Naive thymus-derived CD4-positive, alpha-beta T cell (primary cell): ENCODE measurements at regions of chr12 and their contacts with region 1.

Region 1: DNA sequence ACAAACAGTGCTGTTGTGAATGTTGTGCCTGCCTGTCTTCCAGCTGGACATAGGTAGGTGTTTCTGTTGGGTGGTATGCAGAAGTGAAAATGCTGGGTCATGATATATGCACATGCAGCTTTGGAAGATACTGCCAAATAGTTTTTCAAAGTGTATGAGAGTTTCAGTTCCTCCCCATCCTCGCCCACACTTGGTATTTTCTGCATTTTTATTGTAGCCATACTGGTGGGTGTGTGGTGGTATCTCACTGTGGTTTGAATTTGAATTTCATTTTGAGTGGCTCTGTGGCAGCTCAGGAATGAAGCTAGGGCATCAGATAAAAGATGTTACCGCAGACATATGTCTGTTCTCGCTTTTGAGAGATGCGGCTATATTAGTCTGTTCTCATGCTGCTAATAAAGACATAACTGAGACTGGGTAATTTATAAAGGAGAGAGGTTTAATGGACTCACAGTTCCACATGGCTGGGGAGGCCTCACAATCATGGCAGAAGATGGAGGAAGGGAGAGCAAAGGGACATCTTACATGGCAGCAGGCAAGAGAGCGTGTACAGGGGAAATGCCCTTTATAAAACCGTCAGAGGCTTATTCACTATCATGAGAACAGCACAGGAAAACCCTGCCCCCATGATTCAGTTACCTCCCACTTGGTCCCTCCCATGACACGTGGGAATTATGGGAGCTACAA is 183.1 kb downstream of the CAND1 start:
- DNase-seq: peak in 1 of 9 donors; percentile 32
- ATAC-seq: peak; percentile 33
- H3K4me3 ChIP-seq: no peak overlapping the region
- H3K4me3 Mint-ChIP-seq: peak overlapping the region in 4 of 10 donors; percentile 3 to 59 (median 6)
- H3K27ac ChIP-seq: no peak overlapping the region
- H3K27ac Mint-ChIP-seq: peak overlapping the region in 2 of 9 donors; percentile 7 to 31
- H3K4me1 ChIP-seq: peaks cover 12 to 28% of the 10 kb centered on the region in 2 donors
- H3K4me1 Mint-ChIP-seq: peaks cover 28 to 54% (median 42%) of the 10 kb centered on the region in 7 donors
- H3K27me3 ChIP-seq: no peaks in the 10 kb centered on the region
- H3K27me3 Mint-ChIP-seq: peaks cover 0 to 29% (median 0%) of the 10 kb centered on the region in 5 donors

Region 2: GRCh38 chr12:67320614-67321295 is 131.5 kb before region 1 on chr12:
- CTCF ChIA-PET with region 1: no interaction called
- POLR2A ChIA-PET with region 1: no interaction called
- intact Hi-C with region 1: no loop called
- DNase-seq: peak in 3 of 9 donors; percentile 15 to 30 (median 25)
- ATAC-seq: peak; percentile 44
- H3K4me3 ChIP-seq: no peak overlapping the region
- H3K4me3 Mint-ChIP-seq: no peak overlapping the region
- H3K27ac ChIP-seq: no peak overlapping the region
- H3K27ac Mint-ChIP-seq: peak overlapping the region in 6 of 9 donors; percentile 26 to 83 (median 63)
- H3K4me1 ChIP-seq: no peaks in the 10 kb centered on the region
- H3K4me1 Mint-ChIP-seq: peaks cover 0 to 18% (median 11%) of the 10 kb centered on the region in 7 donors
- H3K27me3 ChIP-seq: no peaks in the 10 kb centered on the region
- H3K27me3 Mint-ChIP-seq: no peaks in the 10 kb centered on the region

Region 3: GRCh38 chr12:67534681-67535080 is 82.4 kb after region 1 on chr12:
- CTCF ChIA-PET with region 1: no interaction called
- POLR2A ChIA-PET with region 1: no interaction called
- intact Hi-C with region 1: loop called in 1 of 2 experiments (anchors 5 kb)
- DNase-seq: no peak
- ATAC-seq: no peak
- H3K4me3 ChIP-seq: no peak overlapping the region
- H3K4me3 Mint-ChIP-seq: no peak overlapping the region
- H3K27ac ChIP-seq: no peak overlapping the region
- H3K27ac Mint-ChIP-seq: no peak overlapping the region
- H3K4me1 ChIP-seq: no peaks in the 10 kb centered on the region
- H3K4me1 Mint-ChIP-seq: peaks cover 0 to 13% (median 9%) of the 10 kb centered on the region in 7 donors
- H3K27me3 ChIP-seq: no peaks in the 10 kb centered on the region
- H3K27me3 Mint-ChIP-seq: peaks cover 0 to 21% (median 0%) of the 10 kb centered on the region in 5 donors